ENCODE measurements at regions of chr9 and their contacts with region 1.

Region 1: DNA sequence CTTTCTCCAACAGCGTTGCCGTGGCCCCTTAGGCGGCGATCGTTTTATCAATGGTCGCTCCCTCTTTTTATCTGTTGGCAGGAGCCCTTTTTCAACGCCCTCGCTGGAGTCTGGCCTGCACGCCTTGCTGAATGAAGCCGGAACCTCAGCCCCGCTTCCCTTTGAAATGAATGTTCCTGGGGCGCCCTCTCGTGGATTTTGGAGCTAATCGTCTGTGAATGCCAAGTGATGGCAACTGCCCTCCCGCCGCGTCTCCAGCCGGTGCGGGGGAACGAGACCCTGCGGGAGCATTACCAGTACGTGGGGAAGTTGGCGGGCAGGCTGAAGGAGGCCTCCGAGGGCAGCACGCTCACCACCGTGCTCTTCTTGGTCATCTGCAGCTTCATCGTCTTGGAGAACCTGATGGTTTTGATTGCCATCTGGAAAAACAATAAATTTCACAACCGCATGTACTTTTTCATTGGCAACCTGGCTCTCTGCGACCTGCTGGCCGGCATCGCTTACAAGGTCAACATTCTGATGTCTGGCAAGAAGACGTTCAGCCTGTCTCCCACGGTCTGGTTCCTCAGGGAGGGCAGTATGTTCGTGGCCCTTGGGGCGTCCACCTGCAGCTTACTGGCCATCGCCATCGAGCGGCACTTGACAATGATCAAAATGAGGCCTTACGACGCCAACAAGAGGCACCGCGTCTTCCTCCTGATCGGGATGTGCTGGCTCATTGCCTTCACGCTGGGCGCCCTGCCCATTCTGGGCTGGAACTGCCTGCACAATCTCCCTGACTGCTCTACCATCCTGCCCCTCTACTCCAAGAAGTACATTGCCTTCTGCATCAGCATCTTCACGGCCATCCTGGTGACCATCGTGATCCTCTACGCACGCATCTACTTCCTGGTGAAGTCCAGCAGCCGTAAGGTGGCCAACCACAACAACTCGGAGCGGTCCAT is 10.0 kb downstream of the S1PR3 start:
- DNase-seq: peak; percentile 94
- H3K4me3 ChIP-seq: peak overlapping the region; percentile 60
- H3K27ac ChIP-seq: no peak overlapping the region
- H3K4me1 ChIP-seq: peaks cover 8% of the 10 kb centered on the region; the same call in 1 of the 2 replicates
- H3K27me3 ChIP-seq: no peaks in the 10 kb centered on the region

Region 2: GRCh38 chr9:88593537-88594185 is 407.6 kb before region 1 on chr9:
- in situ Hi-C with region 1: loop called (anchors 5 kb)
- DNase-seq: peak; percentile 85
- H3K4me3 ChIP-seq: no peak overlapping the region
- H3K27ac ChIP-seq: no peak overlapping the region
- H3K4me1 ChIP-seq: no peaks in the 10 kb centered on the region
- H3K27me3 ChIP-seq: no peaks in the 10 kb centered on the region

Region 3: GRCh38 chr9:89093201-89093975 is 92.1 kb after region 1 on chr9:
- in situ Hi-C with region 1: no loop called
- DNase-seq: no peak
- H3K4me3 ChIP-seq: no peak overlapping the region
- H3K27ac ChIP-seq: no peak overlapping the region
- H3K4me1 ChIP-seq: no peaks in the 10 kb centered on the region
- H3K27me3 ChIP-seq: no peaks in the 10 kb centered on the region

Measured in GM23248 (cell line).